Endothelial cell of umbilical vein (primary cell): ENCODE measurements at regions of chr1 and their contacts with region 1.

Region 1: DNA sequence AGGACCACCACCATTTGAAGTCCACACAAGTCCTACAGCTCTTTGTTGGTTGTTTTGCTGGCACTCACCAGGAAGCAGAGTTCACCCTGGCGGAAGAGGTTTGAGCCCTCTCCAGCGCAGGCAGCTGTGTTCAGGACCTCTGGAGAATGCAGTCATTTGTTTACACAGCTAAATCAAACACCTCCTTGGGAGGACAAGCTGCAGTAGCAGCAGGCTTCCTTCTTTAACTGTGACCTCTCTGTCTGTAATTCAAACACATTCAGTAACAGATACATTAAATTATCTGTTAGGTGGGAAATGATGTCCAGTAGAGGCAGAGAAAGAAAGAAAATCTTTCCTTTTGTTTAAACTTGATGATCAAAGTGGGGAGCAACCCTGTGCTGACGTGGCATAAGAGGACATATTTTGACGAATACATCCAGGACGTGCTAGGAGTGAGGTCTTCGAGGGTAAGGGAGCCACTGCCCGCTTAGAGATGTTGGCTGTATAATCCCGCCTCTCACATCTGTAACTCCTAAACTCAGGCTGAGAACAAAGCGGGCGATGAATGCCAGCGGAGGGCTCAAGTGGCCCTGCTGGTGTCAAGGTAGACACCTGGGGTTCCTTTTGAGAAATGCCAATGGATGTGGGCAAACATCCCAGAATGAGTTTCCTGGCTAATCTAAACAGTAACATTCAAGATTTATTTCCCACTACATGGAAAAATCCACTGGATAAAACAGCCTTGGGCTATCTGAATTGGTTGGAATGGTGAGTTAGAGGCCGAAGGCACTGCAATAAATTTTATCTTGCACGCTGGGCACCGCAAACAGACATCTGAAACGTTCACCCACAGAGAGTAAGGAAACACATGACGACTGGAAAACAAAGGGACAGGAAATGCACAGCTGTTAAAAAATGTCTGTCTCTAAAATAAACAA is 51.7 kb downstream of the ABCA4 start:
- DNase-seq: peak; percentile 98
- H3K4me3 ChIP-seq: no peak overlapping the region
- H3K27ac ChIP-seq: peak overlapping the region; percentile 100
- H3K4me1 ChIP-seq: peaks cover 77% of the 10 kb centered on the region
- H3K27me3 ChIP-seq: no peaks in the 10 kb centered on the region
- CTCF ChIP-seq: no peak
- POLR2A ChIP-seq: no peak

Region 2: GRCh38 chr1:93207211-93207610 is 862.0 kb before region 1 on chr1:
- CTCF ChIA-PET with region 1: no interaction called
- POLR2A ChIA-PET with region 1: no interaction called
- dilution Hi-C with region 1: no loop called
- intact Hi-C with region 1: no loop called
- DNase-seq: no peak
- H3K4me3 ChIP-seq: no peak overlapping the region
- H3K27ac ChIP-seq: no peak overlapping the region
- H3K4me1 ChIP-seq: no peaks in the 10 kb centered on the region
- H3K27me3 ChIP-seq: no peaks in the 10 kb centered on the region
- CTCF ChIP-seq: no peak
- POLR2A ChIP-seq: no peak

Region 3: DNA sequence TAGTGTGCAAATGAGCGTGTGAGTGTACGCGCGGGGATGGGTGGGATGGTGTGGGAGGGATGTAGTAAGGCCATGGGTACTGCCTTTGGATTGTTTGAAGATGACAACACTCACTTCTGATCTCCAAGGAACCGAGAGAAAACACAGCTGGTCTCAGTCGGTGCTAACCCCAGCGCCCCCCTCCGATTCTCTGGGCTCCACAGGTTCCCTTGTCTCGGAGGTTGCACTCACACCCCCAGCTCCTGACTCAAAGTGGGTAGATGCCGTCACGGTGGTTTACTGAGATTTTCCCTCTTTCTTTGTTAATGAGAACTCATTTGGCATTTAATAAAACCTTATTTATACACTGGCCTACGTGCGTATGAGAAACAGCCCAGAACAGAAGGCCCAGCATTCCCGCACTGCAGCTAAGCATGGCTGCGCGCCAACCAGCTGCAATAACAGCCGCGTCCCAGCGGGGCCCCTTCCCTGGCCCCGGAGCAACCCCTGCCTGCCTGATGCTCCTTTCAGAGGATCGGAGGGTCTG is 25.9 kb after region 1 on chr1:
- CTCF ChIA-PET with region 1: interaction called, 38 read pairs
- POLR2A ChIA-PET with region 1: interaction called, 15 read pairs
- dilution Hi-C with region 1: no loop called
- intact Hi-C with region 1: loop called (anchors 1 kb)
- DNase-seq: peak; percentile 97
- H3K4me3 ChIP-seq: no peak overlapping the region
- H3K27ac ChIP-seq: peak overlapping the region; percentile 91
- H3K4me1 ChIP-seq: peaks cover 56% of the 10 kb centered on the region
- H3K27me3 ChIP-seq: no peaks in the 10 kb centered on the region
- CTCF ChIP-seq: no peak
- POLR2A ChIP-seq: peak; percentile 5

Region 4: DNA sequence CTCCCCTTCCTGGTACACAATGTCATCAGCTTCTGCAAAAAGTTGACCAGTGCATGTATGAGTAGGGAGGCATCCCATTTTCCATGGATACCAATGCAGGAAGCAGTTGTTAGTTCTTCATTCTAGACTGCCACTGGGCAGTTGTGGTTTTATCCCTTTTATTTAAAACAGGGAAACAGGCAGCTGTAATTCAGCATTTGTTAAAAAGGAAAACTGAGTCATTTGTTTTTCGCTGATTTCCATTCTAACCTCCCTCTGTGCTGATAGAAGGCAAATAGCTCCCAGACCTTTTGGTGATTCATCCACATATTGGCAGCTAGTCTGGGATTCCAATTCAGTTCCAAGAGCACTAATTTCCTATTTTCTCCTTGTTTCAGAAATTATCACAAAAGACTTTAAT is 72.8 kb after region 1 on chr1:
- CTCF ChIA-PET with region 1: interaction called, 4 read pairs
- POLR2A ChIA-PET with region 1: interaction called, 4 read pairs
- dilution Hi-C with region 1: no loop called
- intact Hi-C with region 1: loop called (anchors 2 kb)
- DNase-seq: peak; percentile 98
- H3K4me3 ChIP-seq: no peak overlapping the region
- H3K27ac ChIP-seq: peak overlapping the region; percentile 84
- H3K4me1 ChIP-seq: peaks cover 22% of the 10 kb centered on the region
- H3K27me3 ChIP-seq: no peaks in the 10 kb centered on the region
- CTCF ChIP-seq: no peak
- POLR2A ChIP-seq: no peak

Region 5: GRCh38 chr1:94160811-94161210 is 91.6 kb after region 1 on chr1:
- CTCF ChIA-PET with region 1: interaction called, 19 read pairs
- POLR2A ChIA-PET with region 1: interaction called, 6 read pairs
- dilution Hi-C with region 1: no loop called
- intact Hi-C with region 1: loop called (anchors 1 kb)
- DNase-seq: peak; percentile 76
- H3K4me3 ChIP-seq: no peak overlapping the region
- H3K27ac ChIP-seq: peak overlapping the region; percentile 23
- H3K4me1 ChIP-seq: peaks cover 5% of the 10 kb centered on the region
- H3K27me3 ChIP-seq: no peaks in the 10 kb centered on the region
- CTCF ChIP-seq: no peak
- POLR2A ChIP-seq: no peak

Region 6: GRCh38 chr1:94165843-94166242 is 96.6 kb after region 1 on chr1:
- CTCF ChIA-PET with region 1: interaction called, 19 read pairs
- POLR2A ChIA-PET with region 1: interaction called, 3 read pairs
- dilution Hi-C with region 1: no loop called
- intact Hi-C with region 1: loop called (anchors 1 kb)
- DNase-seq: no peak
- H3K4me3 ChIP-seq: no peak overlapping the region
- H3K27ac ChIP-seq: no peak overlapping the region
- H3K4me1 ChIP-seq: peaks cover 5% of the 10 kb centered on the region
- H3K27me3 ChIP-seq: no peaks in the 10 kb centered on the region
- CTCF ChIP-seq: no peak
- POLR2A ChIP-seq: no peak

Region 7: DNA sequence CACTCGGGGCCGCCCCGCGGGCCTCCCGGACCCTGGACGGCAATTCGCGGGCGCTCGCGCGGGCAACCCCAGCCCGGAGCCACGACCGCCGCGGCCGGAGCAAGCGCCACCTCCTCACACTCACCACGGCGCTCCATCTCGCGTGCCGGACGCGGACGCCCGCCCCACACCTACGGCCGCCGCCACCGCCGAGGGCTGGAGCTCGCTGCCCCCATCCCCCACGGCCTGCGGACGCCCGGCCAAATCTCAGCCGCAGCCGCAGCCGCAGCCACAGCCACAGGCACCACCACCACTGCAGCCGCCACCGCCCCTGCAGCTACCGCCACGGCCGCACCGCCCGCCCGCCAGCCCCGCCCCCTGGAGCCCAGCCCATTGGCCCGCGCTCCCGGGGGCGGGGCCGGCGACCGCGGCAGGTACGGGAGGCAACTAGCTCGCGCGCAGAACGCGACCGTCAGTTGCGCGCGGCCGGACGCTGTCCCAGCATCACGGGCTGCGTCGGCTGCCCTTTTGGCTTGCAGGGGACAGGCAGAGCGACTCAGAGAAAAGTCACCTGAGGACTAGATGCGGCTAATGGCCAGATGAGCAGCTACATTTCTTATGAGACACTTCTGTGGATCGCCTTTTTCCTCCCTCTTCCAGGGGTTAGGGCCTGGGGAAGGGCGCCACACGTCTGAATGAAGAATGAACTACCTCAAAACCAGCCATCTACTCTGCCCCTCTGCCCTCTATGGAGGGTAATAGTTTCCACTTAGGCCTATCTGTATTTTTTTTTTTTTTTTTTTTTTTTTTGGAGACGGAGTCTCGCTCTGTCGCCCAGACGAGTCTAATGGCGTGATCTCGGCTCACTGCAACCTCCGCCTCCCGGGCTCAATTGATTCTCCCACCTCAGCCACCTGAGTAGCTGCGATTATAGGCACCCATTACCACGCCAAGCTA is 168.3 kb after region 1 on chr1 and contains the start of gene ARHGAP29:
- CTCF ChIA-PET with region 1: interaction called, 4 read pairs
- POLR2A ChIA-PET with region 1: interaction called, 6 read pairs
- dilution Hi-C with region 1: no loop called
- intact Hi-C with region 1: loop called (anchors 2 kb)
- DNase-seq: peak; percentile 86
- H3K4me3 ChIP-seq: peak within 1 kb of the TSS; percentile 88 to 100 (median 95)
- H3K27ac ChIP-seq: peak within 1 kb of the TSS; percentile 93
- H3K4me1 ChIP-seq: peaks cover 67% of the 10 kb centered on the region
- H3K27me3 ChIP-seq: no peaks in the 10 kb centered on the region
- CTCF ChIP-seq: no peak
- POLR2A ChIP-seq: peak; percentile 83
- total RNA-seq, gene ARHGAP29: 199 and 215 TPM in 2 replicates